HAP-1 (cell line): ENCODE measurements at regions of chr16 and their contacts with region 1.

Region 1: DNA sequence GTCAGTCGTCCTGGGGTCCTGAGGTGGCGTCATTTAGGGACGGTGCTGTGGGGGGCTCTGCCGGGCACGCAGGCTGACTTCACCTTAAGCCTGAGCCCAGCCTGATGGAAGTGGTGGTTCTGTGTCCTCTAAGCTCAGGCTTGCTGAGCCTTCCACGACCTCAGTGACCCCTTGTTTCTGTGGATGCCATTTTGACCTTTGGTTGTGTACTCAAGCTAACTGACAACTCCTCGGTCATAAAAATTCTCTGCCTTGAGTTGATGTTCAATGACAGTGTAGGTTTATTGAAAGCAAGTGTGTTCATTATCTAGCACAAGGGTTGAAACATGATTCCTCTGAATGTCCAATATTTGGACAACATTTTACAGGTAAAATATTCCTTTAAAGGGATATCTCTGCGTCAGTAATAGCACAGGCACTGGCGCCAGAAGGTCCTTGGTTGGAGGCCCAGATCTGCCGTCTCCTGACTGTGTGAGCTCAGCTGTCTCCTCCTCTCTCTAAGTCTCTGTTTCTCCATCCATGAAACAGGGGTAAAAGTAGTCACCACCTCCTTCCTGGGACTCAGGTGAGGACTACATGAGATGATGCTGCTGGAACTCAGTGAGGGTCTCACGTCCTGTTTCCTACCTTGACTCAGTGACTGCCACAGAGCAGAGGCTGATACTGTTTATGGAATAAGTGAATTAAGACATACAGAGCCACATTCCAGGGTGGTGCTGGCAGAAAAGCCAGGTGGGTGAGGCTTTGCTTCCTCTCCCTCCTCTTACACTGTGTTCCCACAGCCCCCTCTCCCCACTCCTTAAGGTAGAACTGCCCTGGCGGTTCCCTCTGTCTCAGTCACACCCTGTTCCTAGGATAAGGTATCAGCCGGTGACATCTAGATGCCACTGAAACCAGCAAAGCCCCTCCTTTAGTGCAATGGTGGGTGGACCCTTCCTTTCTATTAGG is 75.7 kb downstream of the IRF8 start:
- DNase-seq: no peak
- H3K4me3 ChIP-seq: no peak overlapping the region
- H3K4me1 ChIP-seq: no peaks in the 10 kb centered on the region
- H3K27me3 ChIP-seq: no peaks in the 10 kb centered on the region

Region 2: GRCh38 chr16:85473909-85474620 is 500.6 kb before region 1 on chr16:
- in situ Hi-C with region 1: no loop called
- DNase-seq: no peak
- H3K4me3 ChIP-seq: no peak overlapping the region
- H3K4me1 ChIP-seq: no peaks in the 10 kb centered on the region
- H3K27me3 ChIP-seq: no peaks in the 10 kb centered on the region

Region 3: GRCh38 chr16:85923153-85924021 is 51.3 kb before region 1 on chr16:
- in situ Hi-C with region 1: loop called (anchors 5 kb)
- DNase-seq: no peak
- H3K4me3 ChIP-seq: no peak overlapping the region
- H3K4me1 ChIP-seq: no peaks in the 10 kb centered on the region
- H3K27me3 ChIP-seq: peaks cover 14% of the 10 kb centered on the region